Activated CD4-positive, alpha-beta T cell treated with anti-CD3 and anti-CD28 coated beads for 36 hours (primary cell): ENCODE measurements at regions of chr15 and their contacts with region 1.

Region 1: DNA sequence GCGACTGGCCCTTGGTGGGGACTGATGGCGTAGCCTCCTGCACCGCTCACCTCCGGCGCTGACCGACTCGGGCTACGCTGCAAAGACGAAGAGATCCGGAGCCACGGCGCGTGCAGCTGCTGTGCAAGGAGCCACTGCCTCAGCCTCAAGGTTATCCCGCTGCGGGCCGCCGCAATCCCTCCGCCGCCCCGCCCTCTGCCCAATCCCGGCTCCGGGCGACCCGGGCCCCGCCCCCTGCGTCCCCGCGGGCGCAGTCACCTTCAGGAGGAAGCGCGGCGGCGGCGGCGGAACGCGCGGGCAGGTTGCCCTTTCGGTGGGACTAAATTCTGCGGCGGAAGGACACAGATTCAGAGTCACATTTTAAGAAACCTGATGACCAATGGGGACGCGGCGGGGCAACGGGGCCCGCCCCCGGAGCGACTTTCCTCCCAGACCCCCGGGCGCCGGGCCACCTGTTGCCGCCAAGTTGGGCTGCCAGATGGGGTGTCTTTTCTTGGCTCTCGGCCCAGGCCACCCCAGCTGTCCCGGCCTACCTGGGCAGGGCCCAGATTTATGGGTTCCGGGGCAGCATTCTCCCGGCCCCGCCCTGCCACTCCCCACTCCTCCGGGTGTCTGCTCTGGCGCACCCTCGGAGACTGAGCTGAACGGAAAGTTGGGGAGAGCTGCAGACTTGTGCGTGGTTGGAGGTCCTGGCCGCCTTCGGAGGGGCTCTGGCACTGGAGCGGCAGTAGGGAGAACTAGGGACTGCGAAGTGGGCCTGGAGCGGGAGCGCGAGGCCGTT is at the start of gene PKM:
- DNase-seq: peak; percentile 99
- ATAC-seq: peak; percentile 48
- H3K4me3 Mint-ChIP-seq: peak within 1 kb of the TSS; percentile 98
- H3K27ac Mint-ChIP-seq: peak within 1 kb of the TSS; percentile 99
- H3K4me1 Mint-ChIP-seq: peaks cover 27% of the 10 kb centered on the region
- H3K27me3 Mint-ChIP-seq: no peaks in the 10 kb centered on the region
- total RNA-seq, gene PKM: 2,479 to 3,112 TPM

Region 2: GRCh38 chr15:72199711-72200212 is 31.5 kb before region 1 on chr15:
- CTCF ChIA-PET with region 1: interaction called, 22 read pairs
- POLR2A ChIA-PET with region 1: interaction called, 8 read pairs
- intact Hi-C with region 1: loop called (anchors 2 kb)
- DNase-seq: peak; percentile 82
- ATAC-seq: peak; percentile 47
- H3K4me3 Mint-ChIP-seq: no peak overlapping the region
- H3K27ac Mint-ChIP-seq: no peak overlapping the region
- H3K4me1 Mint-ChIP-seq: peaks cover 19% of the 10 kb centered on the region
- H3K27me3 Mint-ChIP-seq: peaks cover 12% of the 10 kb centered on the region

Region 3: DNA sequence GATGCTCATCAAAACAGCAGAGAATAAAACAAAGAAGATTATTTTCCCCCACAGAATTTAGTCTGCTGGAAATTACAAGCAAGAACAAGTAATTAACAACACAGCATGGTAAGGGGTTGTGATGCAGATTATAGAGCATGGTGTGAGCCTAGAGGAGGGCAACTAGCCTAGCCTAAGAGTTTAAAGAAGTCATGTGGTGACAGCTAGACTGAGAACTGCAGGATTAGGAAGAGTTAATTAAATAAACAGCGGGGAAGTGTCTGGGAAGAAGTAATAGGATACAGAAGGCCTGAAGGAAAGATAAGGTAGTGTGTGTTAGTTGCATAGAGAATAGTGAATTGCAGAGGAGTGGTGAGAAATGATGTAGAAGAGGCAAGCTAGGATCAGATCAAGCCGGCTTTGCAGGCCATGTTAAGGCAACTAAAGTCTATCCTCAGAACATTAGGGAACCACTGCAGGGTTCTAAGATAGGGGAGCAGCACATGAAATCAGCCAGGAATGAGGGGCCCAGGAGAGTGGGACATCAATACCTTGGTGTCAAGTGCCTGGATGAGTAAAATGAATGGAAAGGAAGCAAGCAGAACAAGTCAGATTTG is 11.6 kb after region 1 on chr15:
- CTCF ChIA-PET with region 1: interaction called, 19 read pairs
- POLR2A ChIA-PET with region 1: interaction called, 27 read pairs
- intact Hi-C with region 1: no loop called
- DNase-seq: no peak
- ATAC-seq: no peak
- H3K4me3 Mint-ChIP-seq: no peak overlapping the region
- H3K27ac Mint-ChIP-seq: no peak overlapping the region
- H3K4me1 Mint-ChIP-seq: peaks cover 13% of the 10 kb centered on the region
- H3K27me3 Mint-ChIP-seq: no peaks in the 10 kb centered on the region

Region 4: DNA sequence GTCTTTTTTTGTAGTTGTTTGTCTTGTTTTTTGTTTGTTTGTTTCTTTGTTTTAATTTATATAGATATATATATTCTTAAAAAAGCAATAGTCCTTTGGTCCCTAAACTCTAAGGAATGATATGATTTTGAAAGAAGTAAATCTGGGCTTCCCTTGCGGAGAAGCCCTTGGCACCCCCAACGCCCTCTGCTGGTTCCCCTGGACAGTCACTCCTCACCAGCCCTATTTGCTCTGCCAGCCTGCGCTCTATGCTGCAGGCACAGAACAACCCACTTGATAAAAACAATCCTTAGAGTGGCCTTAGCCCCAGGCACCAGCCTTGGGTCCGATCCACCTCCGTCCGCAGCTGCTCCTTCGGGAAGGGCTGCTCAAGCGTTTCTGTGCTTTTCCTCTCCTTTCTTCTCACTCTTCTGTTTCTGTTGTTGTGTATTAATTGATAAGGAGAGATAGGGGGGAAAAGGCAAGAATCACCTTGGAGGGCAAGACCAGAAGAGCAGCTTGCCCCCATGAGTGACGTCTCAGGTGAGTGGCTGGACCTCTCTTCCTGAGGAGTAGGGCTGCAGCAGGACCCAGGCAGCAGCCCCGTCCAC is 54.8 kb after region 1 on chr15:
- CTCF ChIA-PET with region 1: interaction called, 10 read pairs
- POLR2A ChIA-PET with region 1: no interaction called
- intact Hi-C with region 1: no loop called
- DNase-seq: peak; percentile 74
- ATAC-seq: peak; percentile 58
- H3K4me3 Mint-ChIP-seq: no peak overlapping the region
- H3K27ac Mint-ChIP-seq: no peak overlapping the region
- H3K4me1 Mint-ChIP-seq: no peaks in the 10 kb centered on the region
- H3K27me3 Mint-ChIP-seq: no peaks in the 10 kb centered on the region

Region 5: DNA sequence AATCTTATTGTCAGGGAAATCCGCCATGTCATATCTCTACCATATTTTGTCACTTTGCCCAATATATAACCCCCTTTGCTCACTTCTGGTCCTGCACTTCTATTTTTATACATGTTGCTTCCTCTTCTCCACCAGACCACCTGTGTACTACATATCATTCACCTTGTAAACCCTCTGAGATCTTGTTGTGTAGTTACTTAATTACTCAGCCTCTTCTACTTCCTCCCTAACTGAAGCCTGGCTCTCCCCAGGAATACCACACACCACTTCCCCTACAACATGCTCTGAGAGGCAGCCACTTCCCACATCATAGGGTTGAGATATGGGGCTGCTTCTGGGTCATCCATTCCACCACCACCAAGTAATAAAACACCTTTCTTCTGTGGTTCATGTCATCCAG is 134.6 kb after region 1 on chr15:
- CTCF ChIA-PET with region 1: no interaction called
- POLR2A ChIA-PET with region 1: no interaction called
- intact Hi-C with region 1: no loop called
- DNase-seq: peak; percentile 15
- ATAC-seq: peak; percentile 78
- H3K4me3 Mint-ChIP-seq: no peak overlapping the region
- H3K27ac Mint-ChIP-seq: peak overlapping the region; percentile 16
- H3K4me1 Mint-ChIP-seq: peaks cover 21% of the 10 kb centered on the region
- H3K27me3 Mint-ChIP-seq: no peaks in the 10 kb centered on the region

Region 6: GRCh38 chr15:72473614-72474465 is 242.6 kb after region 1 on chr15 and contains the start of gene ARIH1:
- CTCF ChIA-PET with region 1: interaction called, 3 read pairs
- POLR2A ChIA-PET with region 1: interaction called, 11 read pairs
- intact Hi-C with region 1: loop called (anchors 1 to 2 kb)
- DNase-seq: peak; percentile 97
- ATAC-seq: peak; percentile 78
- H3K4me3 Mint-ChIP-seq: peak within 1 kb of the TSS; percentile 92
- H3K27ac Mint-ChIP-seq: peak within 1 kb of the TSS; percentile 92
- H3K4me1 Mint-ChIP-seq: peaks cover 36% of the 10 kb centered on the region
- H3K27me3 Mint-ChIP-seq: no peaks in the 10 kb centered on the region
- total RNA-seq, gene ARIH1: 177 to 195 TPM

Region 7: GRCh38 chr15:73051811-73052678 is 820.8 kb after region 1 on chr15 and contains the start of gene NEO1:
- CTCF ChIA-PET with region 1: no interaction called
- POLR2A ChIA-PET with region 1: no interaction called
- intact Hi-C with region 1: loop called in 1 of 2 experiments (anchors 2 kb)
- DNase-seq: peak; percentile 87
- ATAC-seq: peak; percentile 80
- H3K4me3 Mint-ChIP-seq: peak within 1 kb of the TSS; percentile 74
- H3K27ac Mint-ChIP-seq: peak within 1 kb of the TSS; percentile 53
- H3K4me1 Mint-ChIP-seq: peaks cover 6% of the 10 kb centered on the region
- H3K27me3 Mint-ChIP-seq: peaks cover 16% of the 10 kb centered on the region
- total RNA-seq, gene NEO1: 6.6 to 8.0 TPM